HCT116 (cell line): ENCODE measurements at regions of chr11 and their contacts with region 1.

Region 1: DNA sequence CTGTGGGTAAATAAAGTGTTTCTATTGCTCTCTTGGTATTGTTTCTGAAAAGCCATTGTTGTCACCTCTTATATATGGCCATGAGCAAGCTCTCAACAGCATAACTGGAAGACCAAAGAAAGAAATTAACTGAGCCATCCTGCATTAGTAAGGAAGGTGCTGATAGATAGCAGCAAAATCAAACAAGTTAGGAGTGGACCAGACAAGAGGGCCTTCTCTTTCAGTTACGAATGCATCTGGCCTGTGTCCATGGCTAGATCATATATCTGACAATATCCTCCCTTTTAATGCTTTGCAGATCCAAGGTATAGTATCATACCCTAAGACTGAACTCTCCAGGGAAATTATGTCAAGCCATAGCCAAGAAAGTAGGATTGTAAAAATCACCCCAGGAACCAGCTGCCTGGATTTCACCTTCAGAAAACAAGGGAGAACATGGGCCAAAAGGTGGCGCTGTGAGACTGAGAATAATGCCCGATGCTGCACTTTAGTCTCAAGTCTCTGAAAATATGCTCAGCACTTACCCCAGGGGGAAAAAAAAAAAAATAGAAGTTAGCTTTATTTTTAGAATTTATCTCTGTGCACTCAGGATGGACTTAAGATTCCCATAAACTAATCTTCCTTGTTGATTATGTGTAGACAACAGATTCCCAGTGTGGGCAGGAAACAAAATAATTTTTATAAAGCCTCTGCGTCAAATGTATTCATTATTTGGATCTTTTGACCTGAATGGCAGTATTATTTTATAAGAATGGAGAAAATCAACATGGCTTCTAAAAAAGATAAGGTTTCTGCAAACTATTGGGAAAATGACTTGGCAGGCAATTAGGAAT is 415.1 kb downstream of the ETS1 start:
- DNase-seq: peak; percentile 74
- ATAC-seq: peak; percentile 85
- H3K4me3 ChIP-seq: no peak overlapping the region
- H3K27ac ChIP-seq: no peak overlapping the region
- H3K4me1 ChIP-seq: no peaks in the 10 kb centered on the region
- H3K27me3 ChIP-seq: peaks cover 15% of the 10 kb centered on the region
- CTCF ChIP-seq: peak; percentile 65 to 83 (median 77)
- POLR2A ChIP-seq: no peak
- RAD21 ChIP-seq: peak; percentile 91

Region 2: DNA sequence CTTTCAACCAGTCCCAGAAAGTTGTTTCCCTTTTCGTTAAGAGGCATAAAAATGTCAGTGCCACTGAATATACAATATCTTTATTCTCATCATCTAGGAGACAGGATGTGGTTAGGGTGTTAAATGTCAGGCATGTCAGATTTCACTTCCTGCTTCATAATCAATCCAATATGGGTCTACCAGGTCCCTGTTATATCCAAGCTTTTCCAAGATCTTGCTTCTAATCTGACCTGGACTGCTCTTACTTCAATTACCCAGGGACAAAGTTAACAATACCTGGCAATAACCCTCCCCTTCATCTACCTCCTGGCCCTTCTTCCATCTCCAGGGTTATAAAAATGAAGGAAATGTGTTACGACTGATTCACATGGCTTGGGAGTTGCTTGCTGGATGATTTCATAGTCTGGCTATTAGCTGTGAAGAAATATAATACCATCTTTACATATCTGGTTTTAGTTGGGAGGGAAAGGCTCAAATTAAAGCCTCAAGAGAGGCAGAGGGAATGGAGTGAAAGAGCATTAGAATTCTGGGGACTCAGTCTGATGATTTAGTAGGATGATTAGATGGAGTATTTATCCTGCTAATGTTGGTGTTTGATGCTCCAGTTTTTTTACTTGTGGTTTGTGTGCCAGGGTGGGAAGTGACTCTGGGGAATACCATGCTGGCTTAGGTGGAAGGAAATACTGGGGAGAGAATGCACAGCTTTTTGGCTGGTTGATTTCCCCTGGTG is 119.2 kb before region 1 on chr11:
- CTCF ChIA-PET with region 1: no interaction called
- POLR2A ChIA-PET with region 1: no interaction called
- RAD21 ChIA-PET with region 1: no interaction called
- intact Hi-C with region 1: no loop called
- DNase-seq: no peak
- ATAC-seq: no peak
- H3K4me3 ChIP-seq: no peak overlapping the region
- H3K27ac ChIP-seq: no peak overlapping the region
- H3K4me1 ChIP-seq: no peaks in the 10 kb centered on the region
- H3K27me3 ChIP-seq: no peaks in the 10 kb centered on the region
- CTCF ChIP-seq: no peak
- POLR2A ChIP-seq: no peak
- RAD21 ChIP-seq: no peak

Region 3: DNA sequence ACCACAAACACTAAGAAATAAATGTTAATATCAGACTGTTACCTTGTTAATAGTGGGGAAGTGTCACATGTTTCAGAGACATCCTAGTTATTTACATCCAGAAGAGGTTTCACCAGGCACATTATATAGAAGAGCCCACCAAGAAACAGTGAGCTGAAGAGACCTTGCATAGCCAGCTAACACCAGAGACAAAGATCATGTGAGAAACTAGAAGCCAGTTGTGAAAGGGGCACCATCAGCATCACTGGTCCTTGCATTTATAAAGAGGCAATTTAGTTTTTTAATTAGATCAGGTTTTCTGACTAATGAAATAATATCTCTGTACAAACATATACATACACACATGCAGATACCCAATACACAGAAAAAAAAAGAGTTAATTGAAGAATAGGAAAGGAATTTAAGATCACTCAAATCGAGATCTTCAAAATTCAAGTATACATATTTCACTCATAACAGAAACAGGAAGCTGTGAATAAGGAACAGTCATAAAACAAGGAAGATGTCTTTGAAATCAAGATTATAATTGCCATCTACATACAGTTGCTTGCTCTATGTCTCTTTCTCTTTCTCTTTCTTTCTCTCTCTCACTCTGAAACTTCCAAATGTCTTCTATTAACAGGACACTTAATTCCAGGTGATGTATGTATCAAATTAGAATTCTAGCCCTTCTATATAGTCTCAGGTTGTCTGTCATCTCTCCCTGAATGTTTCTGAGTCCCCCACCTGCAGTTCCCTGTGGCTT is 66.4 kb after region 1 on chr11:
- CTCF ChIA-PET with region 1: no interaction called
- POLR2A ChIA-PET with region 1: no interaction called
- RAD21 ChIA-PET with region 1: no interaction called
- intact Hi-C with region 1: no loop called
- DNase-seq: no peak
- ATAC-seq: no peak
- H3K4me3 ChIP-seq: no peak overlapping the region
- H3K27ac ChIP-seq: no peak overlapping the region
- H3K4me1 ChIP-seq: no peaks in the 10 kb centered on the region
- H3K27me3 ChIP-seq: no peaks in the 10 kb centered on the region
- CTCF ChIP-seq: no peak
- POLR2A ChIP-seq: no peak
- RAD21 ChIP-seq: no peak

Region 4: GRCh38 chr11:128290106-128290840 is 118.0 kb after region 1 on chr11:
- CTCF ChIA-PET with region 1: interaction called, 7 read pairs
- POLR2A ChIA-PET with region 1: no interaction called
- RAD21 ChIA-PET with region 1: no interaction called
- intact Hi-C with region 1: loop called (anchors 1 kb)
- DNase-seq: peak; percentile 46
- ATAC-seq: peak; percentile 95
- H3K4me3 ChIP-seq: no peak overlapping the region
- H3K27ac ChIP-seq: no peak overlapping the region
- H3K4me1 ChIP-seq: no peaks in the 10 kb centered on the region
- H3K27me3 ChIP-seq: peaks cover 21% of the 10 kb centered on the region; the same call in 1 of the 2 replicates
- CTCF ChIP-seq: peak; percentile 67 to 81 (median 80)
- POLR2A ChIP-seq: no peak
- RAD21 ChIP-seq: peak; percentile 90

Region 5: DNA sequence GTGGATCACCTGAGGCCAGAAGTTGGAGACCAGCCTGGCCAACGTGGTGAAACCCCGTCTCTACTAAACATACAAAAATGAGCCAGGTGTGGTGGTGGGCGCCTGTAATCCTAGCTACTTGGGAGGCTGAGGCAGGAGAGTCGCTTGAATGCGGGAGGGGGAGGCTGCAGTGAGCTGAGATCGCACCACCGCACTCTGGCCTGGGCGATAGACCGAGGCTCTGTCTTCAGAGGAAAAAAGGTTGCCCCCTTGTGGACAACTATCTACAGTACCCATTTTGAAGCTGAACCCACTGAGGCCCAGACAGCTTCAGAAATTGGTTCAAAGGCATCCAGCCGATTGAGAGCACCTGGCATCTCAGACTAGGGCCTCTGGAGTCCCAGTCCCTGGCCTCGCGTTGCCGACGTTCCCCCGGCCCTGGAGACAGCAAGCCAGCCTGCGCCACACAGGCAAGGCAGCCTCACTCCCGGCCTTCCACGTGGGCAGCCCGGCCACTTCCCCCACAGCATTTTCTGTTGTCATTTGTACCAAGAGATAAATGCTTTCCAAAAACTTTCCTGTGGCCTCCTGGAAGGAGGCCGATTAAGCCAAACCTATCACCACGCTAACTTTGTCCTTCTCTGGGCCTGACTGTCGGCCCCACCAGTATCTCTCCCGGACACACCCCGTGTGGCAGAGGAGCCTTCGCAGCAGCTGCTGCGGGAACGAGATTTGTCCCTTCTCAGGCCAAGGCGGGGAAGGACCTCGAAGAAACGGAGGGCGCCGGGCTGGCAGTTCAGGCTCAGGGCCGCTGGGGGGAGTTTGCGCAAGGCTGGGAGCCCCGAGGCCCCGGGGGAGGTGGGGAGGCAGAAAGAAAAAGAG is 604.4 kb after region 1 on chr11:
- CTCF ChIA-PET with region 1: interaction called, 10 read pairs
- POLR2A ChIA-PET with region 1: no interaction called
- RAD21 ChIA-PET with region 1: no interaction called
- intact Hi-C with region 1: no loop called
- DNase-seq: peak; percentile 22
- ATAC-seq: peak; percentile 95
- H3K4me3 ChIP-seq: no peak overlapping the region
- H3K27ac ChIP-seq: no peak overlapping the region
- H3K4me1 ChIP-seq: peaks cover 0 to 8% of the 10 kb centered on the region in 2 experiments; a peak in 2 of 4 replicates
- H3K27me3 ChIP-seq: 0 out of 2 replicates have a peak, but pooled peaks cover 3% of the 10 kb centered on the region
- CTCF ChIP-seq: peak; percentile 39 to 74 (median 59); a peak in 5 of 6 replicates
- POLR2A ChIP-seq: no peak
- RAD21 ChIP-seq: peak; percentile 38

Region 6: GRCh38 chr11:128831174-128832120 is 659.2 kb after region 1 on chr11:
- CTCF ChIA-PET with region 1: interaction called, 17 read pairs
- POLR2A ChIA-PET with region 1: no interaction called
- RAD21 ChIA-PET with region 1: interaction called in 1 of 2 experiments, 3 read pairs
- intact Hi-C with region 1: loop called (anchors 1 kb)
- DNase-seq: peak; percentile 68
- ATAC-seq: peak; percentile 95
- H3K4me3 ChIP-seq: no peak overlapping the region
- H3K27ac ChIP-seq: no peak overlapping the region
- H3K4me1 ChIP-seq: no peaks in the 10 kb centered on the region
- H3K27me3 ChIP-seq: no peaks in the 10 kb centered on the region; the same call in 1 of the 2 replicates
- CTCF ChIP-seq: peak; percentile 80 to 87 (median 86)
- POLR2A ChIP-seq: no peak
- RAD21 ChIP-seq: peak; percentile 90

Region 7: DNA sequence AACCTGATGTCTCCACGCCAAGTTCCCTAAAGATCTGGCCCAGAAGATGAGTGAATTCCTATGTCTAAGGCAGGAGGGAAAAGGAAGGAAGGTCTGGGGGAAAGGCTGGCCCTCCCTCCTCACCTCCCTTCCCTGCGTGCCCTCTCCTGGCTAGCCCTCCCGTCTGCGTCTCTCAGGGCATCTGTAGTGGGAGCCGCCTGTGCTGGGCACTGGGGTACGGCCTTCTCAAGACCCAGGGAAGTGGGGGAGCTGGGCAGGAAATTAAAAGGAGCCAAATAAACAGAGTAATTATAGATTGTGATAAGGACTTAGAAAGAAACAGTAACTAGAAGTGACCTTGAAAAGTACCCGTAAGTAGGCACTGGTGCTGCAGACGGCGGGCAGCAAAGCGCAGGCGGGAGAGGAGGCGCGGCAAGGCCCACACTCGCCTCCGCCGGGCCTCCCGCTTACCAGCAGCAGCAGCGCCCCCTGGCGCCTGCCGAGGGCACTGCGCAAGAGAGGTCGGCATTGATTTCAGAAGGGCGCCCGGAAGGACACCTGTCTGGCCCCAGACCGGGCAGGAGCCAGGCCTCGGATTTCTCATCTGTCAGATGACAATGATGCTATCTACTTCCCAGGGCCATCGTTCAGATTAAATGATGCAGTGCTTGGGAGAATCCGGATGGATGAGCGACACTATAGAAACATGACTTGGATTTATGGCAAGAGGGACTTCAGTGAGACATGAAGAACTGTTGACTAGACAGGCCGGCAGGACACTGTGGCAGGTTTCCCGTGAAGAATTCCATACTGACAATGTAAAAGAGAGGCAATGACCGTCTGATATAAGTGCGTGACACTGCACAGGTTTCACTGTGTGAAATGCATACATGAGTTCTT is 687.5 kb after region 1 on chr11:
- CTCF ChIA-PET with region 1: no interaction called
- POLR2A ChIA-PET with region 1: no interaction called
- RAD21 ChIA-PET with region 1: no interaction called
- intact Hi-C with region 1: loop called (anchors 1 kb)
- DNase-seq: peak; percentile 68
- ATAC-seq: peak; percentile 99
- H3K4me3 ChIP-seq: no peak overlapping the region; a peak in 1 of 4 replicates
- H3K27ac ChIP-seq: no peak overlapping the region
- H3K4me1 ChIP-seq: peaks cover 0 to 10% of the 10 kb centered on the region in 2 experiments; a peak in 1 of 4 replicates
- H3K27me3 ChIP-seq: peaks cover 2% of the 10 kb centered on the region; the same call in 1 of the 2 replicates
- CTCF ChIP-seq: peak; percentile 81 to 98 (median 97)
- POLR2A ChIP-seq: no peak
- RAD21 ChIP-seq: peak; percentile 67